ENCODE measurements at regions of chr12 and their contacts with region 1.

Region 1: DNA sequence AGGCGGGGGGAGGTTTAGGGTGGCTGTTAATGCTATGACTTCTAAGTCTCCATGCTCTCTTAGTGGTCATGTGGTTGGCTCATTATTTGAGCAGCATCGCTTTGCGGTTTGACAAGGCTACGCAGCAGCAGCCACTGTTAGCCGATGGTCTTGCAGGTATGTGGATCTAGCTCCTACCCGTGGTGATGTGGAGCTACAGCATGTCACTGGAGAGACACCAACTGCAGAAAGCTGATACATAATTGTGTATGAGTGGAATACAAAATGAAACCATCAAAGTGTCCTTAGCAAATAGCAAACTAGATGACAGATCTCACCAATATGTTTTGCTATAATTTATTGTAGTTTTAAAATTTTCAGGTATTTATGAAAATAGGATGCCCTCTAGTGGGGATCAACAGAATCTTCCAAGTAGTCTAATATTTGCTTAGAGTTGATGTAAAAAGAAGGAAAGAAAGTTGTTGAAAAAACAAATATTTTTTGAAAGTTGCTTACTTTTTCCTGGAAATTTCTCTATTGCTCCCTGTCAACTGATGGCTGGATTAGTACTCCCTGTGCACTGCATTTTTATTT is 94.9 kb downstream of the NAV3 start:
- DNase-seq: peak; percentile 92
- H3K4me3 ChIP-seq: no peak overlapping the region
- H3K27ac ChIP-seq: no peak overlapping the region
- H3K4me1 ChIP-seq: no peaks in the 10 kb centered on the region
- H3K27me3 ChIP-seq: no peaks in the 10 kb centered on the region
- CTCF ChIP-seq: peak; percentile 91 to 99
- POLR2A ChIP-seq: no peak

Region 2: DNA sequence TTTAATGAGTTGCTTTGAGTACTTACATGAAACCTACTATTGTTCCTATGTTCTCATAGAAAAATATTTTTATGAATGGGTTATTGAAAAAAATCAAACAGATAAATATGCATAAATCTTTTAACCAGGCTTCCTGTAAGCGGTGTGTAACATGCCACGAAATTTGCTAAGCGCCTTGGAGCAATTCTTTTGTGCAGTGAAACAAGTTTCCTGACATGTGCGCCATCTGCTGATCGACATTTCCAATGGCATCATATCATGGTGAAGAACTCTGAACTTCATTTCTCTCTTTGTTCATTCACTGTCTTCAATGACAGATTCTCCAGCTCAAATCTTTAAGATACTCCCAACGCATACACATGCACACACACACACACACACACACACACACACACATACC is 240.5 kb before region 1 on chr12:
- CTCF ChIA-PET with region 1: interaction called, 12 read pairs
- POLR2A ChIA-PET with region 1: no interaction called
- dilution Hi-C with region 1: no loop called
- intact Hi-C with region 1: loop called (anchors 1 kb)
- DNase-seq: peak; percentile 80
- H3K4me3 ChIP-seq: no peak overlapping the region
- H3K27ac ChIP-seq: no peak overlapping the region
- H3K4me1 ChIP-seq: peaks cover 2% of the 10 kb centered on the region
- H3K27me3 ChIP-seq: peaks cover 0 to under 1% of the 10 kb centered on the region in 2 experiments
- CTCF ChIP-seq: peak; percentile 54 to 57
- POLR2A ChIP-seq: no peak

Region 3: DNA sequence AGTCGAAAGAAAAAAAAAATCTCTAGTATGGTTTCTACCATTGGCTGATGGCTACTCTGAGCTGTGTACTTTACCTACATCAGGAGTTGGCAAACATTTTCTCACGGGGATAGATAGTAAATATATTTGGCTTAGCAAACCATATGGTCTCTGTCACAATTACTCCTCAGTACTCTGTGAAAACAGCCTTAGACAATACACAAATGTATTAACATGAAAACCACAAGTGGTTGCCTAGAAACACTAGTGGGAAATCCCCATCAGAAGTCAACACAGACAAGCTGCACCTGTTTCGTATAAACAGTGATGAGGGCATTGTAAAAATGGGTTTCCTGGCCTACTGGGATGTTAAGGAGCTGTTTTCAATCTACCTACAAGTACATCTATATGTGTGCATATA is 179.5 kb before region 1 on chr12:
- CTCF ChIA-PET with region 1: interaction called, 23 read pairs
- POLR2A ChIA-PET with region 1: no interaction called
- dilution Hi-C with region 1: no loop called
- intact Hi-C with region 1: no loop called
- DNase-seq: peak; percentile 51
- H3K4me3 ChIP-seq: no peak overlapping the region
- H3K27ac ChIP-seq: no peak overlapping the region
- H3K4me1 ChIP-seq: no peaks in the 10 kb centered on the region
- H3K27me3 ChIP-seq: no peaks in the 10 kb centered on the region
- CTCF ChIP-seq: no peak
- POLR2A ChIP-seq: no peak

Region 4: DNA sequence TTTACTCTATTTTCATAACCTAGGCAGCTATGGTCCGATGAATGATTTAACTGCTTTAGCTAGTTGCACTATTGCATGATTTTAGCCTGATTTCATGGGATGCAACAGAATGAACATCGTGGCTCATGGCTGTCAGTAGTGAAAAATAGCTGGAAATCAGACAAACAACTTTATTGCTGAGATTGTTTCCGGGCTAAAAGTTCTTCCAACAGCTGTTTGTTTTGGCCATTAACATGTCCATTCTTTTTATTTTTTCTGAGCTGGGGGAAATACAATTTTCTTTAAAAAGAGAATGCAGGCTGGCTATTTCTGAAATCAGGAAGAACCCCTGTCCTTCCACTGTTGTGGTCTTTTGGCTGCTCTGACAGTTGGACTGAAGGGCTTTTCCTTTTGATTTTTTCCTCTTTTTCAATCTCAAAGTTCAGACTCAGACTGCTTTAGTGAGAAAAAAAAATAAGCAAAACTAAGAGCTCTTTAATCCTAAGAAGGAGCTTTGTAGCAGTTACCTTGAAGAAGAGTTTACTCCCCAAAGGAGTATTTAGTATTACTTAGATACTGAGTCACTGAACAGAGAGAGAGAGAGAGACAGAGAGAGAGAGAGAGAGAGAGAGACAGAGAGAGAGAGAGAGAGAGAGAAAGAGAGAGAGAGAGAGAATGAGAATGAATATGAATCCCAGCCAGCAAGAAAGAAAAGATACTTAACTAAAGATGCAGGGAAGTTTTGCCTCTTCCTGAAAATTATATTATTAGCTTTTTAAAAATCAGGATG is 94.9 kb before region 1 on chr12 and contains the start of gene NAV3:
- CTCF ChIA-PET with region 1: interaction called, 52 read pairs
- POLR2A ChIA-PET with region 1: no interaction called
- dilution Hi-C with region 1: no loop called
- intact Hi-C with region 1: loop called (anchors 1 kb)
- DNase-seq: peak; percentile 97
- H3K4me3 ChIP-seq: peak within 1 kb of the TSS in 1 of 3 experiments; percentile 25
- H3K27ac ChIP-seq: peak within 1 kb of the TSS; percentile 46
- H3K4me1 ChIP-seq: peaks cover 29% of the 10 kb centered on the region
- H3K27me3 ChIP-seq: no peaks in the 10 kb centered on the region
- CTCF ChIP-seq: no peak
- POLR2A ChIP-seq: peak; percentile 42
- total RNA-seq, gene NAV3: 37.8 and 40.1 TPM in 2 replicates

Region 5: GRCh38 chr12:77914081-77914488 is 11.5 kb before region 1 on chr12:
- CTCF ChIA-PET with region 1: interaction called, 21 read pairs
- POLR2A ChIA-PET with region 1: no interaction called
- dilution Hi-C with region 1: no loop called
- intact Hi-C with region 1: no loop called
- DNase-seq: no peak
- H3K4me3 ChIP-seq: no peak overlapping the region
- H3K27ac ChIP-seq: no peak overlapping the region
- H3K4me1 ChIP-seq: no peaks in the 10 kb centered on the region
- H3K27me3 ChIP-seq: no peaks in the 10 kb centered on the region
- CTCF ChIP-seq: no peak
- POLR2A ChIP-seq: no peak

Region 6: GRCh38 chr12:78210894-78211302 is 285.3 kb after region 1 on chr12:
- CTCF ChIA-PET with region 1: no interaction called
- POLR2A ChIA-PET with region 1: no interaction called
- dilution Hi-C with region 1: no loop called
- intact Hi-C with region 1: no loop called
- DNase-seq: peak; percentile 12
- H3K4me3 ChIP-seq: no peak overlapping the region
- H3K27ac ChIP-seq: no peak overlapping the region
- H3K4me1 ChIP-seq: no peaks in the 10 kb centered on the region
- H3K27me3 ChIP-seq: no peaks in the 10 kb centered on the region
- CTCF ChIP-seq: no peak
- POLR2A ChIP-seq: no peak